GM10248 (cell line): ENCODE measurements at regions of chr4 and their contacts with region 1.

Region 1: DNA sequence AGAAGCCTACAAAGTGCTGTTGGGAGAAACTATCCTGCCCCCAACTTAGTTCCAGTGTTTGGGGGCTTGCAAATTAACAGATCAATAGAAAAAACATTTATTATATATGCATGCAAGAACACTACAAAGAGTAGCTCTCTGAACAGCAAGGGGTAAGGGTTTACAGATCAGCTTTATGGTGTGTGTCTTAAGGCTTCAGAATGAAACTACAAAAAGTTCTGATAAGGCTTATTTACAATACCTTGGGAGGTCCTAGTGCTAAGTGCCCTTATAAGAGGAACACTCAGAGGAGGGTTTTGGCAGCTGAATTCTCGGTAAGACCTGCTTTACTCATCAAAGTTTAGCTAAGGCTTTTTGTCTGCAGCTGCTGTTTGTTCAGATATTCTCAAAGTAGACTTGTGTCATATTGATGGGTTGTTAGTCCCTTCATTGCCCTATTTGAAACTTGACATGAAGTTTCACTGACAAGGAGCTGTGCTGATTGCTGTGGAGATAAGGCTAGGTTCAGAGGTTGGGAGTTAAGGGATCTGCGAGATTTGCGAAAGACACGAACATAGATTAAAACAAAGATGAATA is 7.7 kb downstream of the ERVMER34-1 start:
- DNase-seq: no peak
- CTCF ChIP-seq: no peak

Region 2: GRCh38 chr4:52728691-52729240 is 14.8 kb before region 1 on chr4:
- CTCF ChIA-PET with region 1: interaction called, 12 read pairs
- POLR2A ChIA-PET with region 1: no interaction called
- DNase-seq: no peak
- CTCF ChIP-seq: no peak